ENCODE measurements at regions of chr4 and their contacts with region 1.

Region 1: GRCh38 chr4:6720202-6720699 is 4.3 kb downstream of the BLOC1S4 start:
- DNase-seq: peak; percentile 95

Region 2: DNA sequence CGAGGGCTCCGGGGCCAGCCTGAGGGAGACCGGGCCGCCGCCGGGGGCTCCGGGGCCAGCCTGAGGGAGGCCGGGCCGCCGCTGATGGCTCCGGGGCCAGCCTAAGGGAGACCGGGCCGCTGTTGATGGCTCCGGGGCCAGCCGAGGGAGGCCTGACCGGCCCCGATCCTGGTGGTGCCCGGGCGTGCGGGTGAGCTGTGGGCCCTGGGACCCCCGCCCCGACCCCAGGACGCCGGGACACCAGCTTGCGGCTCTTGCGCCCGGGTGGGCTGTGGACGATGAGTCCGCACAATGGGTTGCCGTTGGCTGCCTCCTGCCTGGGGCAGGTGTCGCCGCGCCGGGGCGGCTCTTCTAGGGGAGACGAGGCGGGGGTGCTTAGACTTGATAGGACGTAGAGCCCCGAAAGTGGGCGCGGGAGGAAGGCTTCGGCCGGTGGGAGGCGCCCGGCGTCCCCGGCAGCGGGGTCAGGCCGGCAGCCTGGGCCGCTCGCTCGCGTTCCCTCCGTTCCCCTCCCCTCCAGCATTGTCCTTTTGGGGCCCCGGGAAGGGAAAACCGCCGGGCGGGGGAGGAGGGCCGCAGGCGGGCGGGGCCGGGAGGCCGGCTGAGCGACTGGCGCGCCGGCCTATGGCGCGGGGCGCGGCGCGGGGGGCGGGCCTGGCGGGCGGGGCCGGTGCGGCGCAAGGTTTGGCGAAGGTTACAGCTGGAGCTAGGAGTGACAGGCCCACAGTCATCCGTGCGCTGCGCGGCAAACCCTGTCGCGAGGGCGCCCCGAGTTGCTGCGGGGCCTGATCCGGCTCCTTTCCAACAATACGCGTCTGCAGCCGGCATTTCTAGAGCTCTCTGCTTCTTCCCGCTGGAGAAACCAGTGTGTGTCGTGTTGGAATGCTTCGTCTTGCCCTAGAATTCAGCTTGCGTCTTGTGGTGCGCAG is 63.1 kb after region 1 on chr4:
- intact Hi-C with region 1: loop called (anchors 5 to 10 kb)
- DNase-seq: peak; percentile 97

Region 3: DNA sequence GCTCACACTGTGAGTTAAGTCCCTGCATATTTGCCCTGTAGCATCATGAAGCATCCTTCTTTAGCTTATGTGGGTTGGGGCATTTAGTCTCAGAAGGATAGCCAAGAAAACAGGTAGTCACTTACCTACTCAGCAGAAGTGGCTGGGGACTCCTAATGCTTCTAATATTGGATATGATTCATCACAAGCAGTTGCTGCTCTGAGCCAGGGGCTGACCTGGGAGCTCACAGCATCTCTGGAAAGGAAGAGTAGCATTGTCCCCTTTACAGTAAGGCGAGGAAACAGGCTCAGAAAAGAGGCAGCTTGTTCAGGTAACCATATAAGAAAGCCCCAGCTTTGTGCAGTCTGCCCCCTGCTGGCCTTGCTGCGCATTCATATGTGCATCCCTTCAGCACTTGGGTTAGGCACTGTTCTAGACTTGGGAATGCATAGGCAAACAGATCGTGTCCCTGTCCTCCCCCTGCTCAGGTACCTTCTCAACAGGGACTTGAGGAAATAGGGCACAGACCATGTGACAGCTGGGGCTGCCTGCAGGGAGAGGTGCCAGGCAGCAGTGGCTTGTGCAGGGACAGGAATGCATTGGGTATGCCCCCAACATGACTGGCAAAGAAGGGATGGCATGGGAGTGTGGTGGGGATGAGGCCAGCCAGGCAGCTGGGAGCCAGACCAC is 153.7 kb after region 1 on chr4:
- intact Hi-C with region 1: loop called (anchors 2 to 5 kb)
- DNase-seq: peak; percentile 91

Region 4: GRCh38 chr4:6986781-6987587 is 266.7 kb after region 1 on chr4:
- intact Hi-C with region 1: loop called in 1 of 2 experiments (anchors 5 kb)
- DNase-seq: peak; percentile 98

Region 5: DNA sequence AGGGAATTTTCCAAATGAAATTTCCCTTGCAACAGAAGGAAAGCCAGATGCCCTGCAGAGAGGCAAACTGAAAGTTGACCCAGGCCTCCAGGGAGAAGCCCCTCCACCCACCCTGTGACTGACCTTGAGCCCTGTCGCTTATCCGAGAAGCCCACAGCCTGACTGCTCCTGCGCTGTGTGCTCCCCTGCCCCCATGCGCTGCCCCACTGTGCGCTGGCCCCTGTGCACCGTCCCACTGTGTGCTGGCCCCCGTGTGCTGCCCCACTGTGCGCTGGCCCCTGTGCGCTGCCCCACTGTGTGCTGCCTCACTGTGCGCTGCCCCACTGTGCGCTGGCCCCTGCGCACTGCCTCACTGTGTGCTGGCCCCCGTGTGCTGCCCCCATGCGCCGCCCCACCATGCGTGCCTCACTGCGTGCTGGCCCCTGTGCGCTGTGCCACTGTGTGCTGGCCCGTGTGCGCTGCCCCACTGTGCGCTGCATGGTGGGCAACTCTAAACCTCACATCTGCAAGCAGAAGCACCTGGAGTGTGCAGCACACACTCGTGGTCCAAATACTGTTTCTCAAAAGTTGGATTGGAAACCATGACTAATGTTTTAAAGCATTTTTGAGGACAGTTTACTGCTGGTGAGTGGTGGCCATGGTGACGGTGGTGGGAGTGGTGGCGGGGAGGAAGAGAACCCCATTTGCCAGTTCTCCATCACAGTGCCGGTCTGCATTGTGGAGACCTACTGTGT is 355.9 kb after region 1 on chr4:
- intact Hi-C with region 1: loop called in 1 of 2 experiments (anchors 5 kb)
- DNase-seq: no peak

Measured in posterior vena cava (tissue), 2 donors.